GM13977 (cell line): ENCODE measurements at regions of chr22 and their contacts with region 1.

Region 1: GRCh38 chr22:46013460-46014416 is 36.8 kb upstream of the WNT7B start:
- DNase-seq: peak; percentile 94
- CTCF ChIP-seq: peak; percentile 69

Region 2: GRCh38 chr22:46090036-46090591 is 76.4 kb after region 1 on chr22:
- in situ Hi-C with region 1: no loop called
- DNase-seq: no peak
- CTCF ChIP-seq: no peak

Region 3: DNA sequence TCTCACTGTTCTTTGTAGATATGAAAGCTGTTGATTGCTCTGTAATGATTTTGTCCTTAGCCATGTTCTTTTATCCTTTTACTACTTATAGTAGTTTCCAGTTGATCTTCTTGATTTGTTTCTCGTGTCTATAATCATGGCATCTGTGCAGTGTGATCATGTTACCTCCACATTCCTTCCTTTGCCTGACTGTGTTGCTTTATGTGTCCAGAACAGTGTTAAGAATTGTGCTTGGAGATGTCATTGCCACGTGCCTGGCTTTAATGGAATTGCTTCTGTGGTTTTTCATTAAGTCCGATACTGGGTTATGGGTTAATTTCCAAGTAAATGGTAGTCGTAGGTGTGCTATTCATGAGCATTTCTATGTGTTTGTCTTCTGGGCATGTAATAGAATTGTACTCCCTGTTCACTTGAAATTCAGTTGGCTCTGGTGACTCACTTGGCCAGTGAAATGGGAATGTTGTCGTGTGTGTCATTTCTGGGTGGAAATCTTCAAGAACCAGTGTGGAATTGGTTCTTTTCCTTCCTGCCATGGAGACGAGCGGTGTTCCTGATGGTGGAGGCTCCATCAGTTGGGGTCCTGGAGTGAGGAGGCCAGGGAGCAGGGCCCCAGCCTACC is 289.7 kb after region 1 on chr22:
- in situ Hi-C with region 1: loop called (anchors 10 kb)
- DNase-seq: no peak
- CTCF ChIP-seq: no peak

Region 4: GRCh38 chr22:46829941-46830715 is 816.4 kb after region 1 on chr22:
- in situ Hi-C with region 1: no loop called
- DNase-seq: no peak
- CTCF ChIP-seq: no peak